ENCODE measurements at regions of chr13 and their contacts with region 1.

Region 1: DNA sequence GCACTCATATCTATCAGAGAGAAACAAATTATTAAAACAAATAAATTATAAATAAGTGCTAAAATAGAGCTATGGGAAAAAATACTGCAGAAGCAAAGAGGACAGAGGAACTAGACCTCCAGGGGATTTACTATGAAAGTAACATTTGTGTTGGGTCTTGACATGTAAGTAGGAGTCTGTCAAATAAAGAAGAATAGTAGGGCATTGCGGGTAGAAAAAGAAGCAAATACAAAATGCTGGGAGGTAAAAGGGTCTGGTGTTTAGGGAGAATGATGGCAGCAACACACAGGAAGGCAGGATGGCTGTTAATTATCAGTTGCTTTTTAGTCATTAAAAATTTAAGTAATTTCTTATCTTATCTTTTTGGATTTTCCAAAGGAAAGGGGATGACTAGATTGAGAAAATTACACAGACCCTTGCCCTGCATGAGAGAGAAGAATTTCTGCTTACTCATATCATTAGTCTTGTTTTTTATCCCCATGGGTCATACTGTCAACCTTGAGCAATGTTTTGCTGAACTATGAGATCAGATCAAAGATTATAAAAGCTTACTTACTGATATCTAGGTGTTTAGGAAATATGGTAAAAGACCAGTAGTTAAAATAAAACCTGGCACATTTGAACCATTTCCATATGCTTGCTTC is 472.7 kb downstream of the DIAPH3 start:
- DNase-seq: no peak
- H3K4me3 ChIP-seq: no peak overlapping the region
- H3K4me1 ChIP-seq: peaks cover 13% of the 10 kb centered on the region
- H3K27me3 ChIP-seq: no peaks in the 10 kb centered on the region

Region 2: DNA sequence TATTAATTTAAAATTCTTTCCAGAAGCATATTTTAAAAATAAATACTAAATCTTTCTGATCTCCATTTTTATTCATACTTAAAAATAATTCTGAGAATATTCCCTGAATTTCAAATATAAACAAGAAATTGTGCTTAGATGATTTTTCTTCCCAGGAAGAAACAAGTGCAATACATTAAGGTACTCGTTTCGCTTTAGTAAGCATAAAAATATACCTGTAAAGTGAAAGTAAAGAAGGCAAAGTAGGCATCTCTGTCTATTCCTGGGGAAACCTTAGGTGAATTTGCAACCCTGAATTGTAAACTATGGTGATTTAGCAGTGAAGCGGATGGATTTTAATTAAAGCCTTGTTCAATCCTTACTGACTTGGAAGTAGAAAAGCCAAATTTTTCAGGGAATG is 118.6 kb after region 1 on chr13:
- in situ Hi-C with region 1: no loop called
- DNase-seq: no peak
- H3K4me3 ChIP-seq: no peak overlapping the region
- H3K4me1 ChIP-seq: no peaks in the 10 kb centered on the region; the same call in 1 of the 2 replicates
- H3K27me3 ChIP-seq: no peaks in the 10 kb centered on the region

Region 3: GRCh38 chr13:60335531-60335930 is 644.6 kb after region 1 on chr13:
- in situ Hi-C with region 1: loop called (anchors 10 kb)
- DNase-seq: peak in 1 of 2 experiments; percentile 38
- H3K4me3 ChIP-seq: no peak overlapping the region
- H3K4me1 ChIP-seq: no peaks in the 10 kb centered on the region
- H3K27me3 ChIP-seq: peaks cover 10% of the 10 kb centered on the region; the same call in 1 of the 2 replicates

Measured in HAP-1 (cell line).